Transverse colon (tissue), 4 donors: ENCODE measurements at regions of chr6 and their contacts with region 1.

Region 1: GRCh38 chr6:10883312-10884244 is 1.7 kb upstream of the GCM2 start:
- DNase-seq: no peak
- H3K4me3 ChIP-seq: no peak overlapping the region
- H3K27ac ChIP-seq: no peak overlapping the region
- H3K4me1 ChIP-seq: peaks cover 0 to 16% (median 4%) of the 10 kb centered on the region in 4 donors
- H3K27me3 ChIP-seq: peaks cover 81% of the 10 kb centered on the region
- CTCF ChIP-seq: no peak
- EP300 ChIP-seq: no peak
- POLR2A ChIP-seq: no peak

Region 2: DNA sequence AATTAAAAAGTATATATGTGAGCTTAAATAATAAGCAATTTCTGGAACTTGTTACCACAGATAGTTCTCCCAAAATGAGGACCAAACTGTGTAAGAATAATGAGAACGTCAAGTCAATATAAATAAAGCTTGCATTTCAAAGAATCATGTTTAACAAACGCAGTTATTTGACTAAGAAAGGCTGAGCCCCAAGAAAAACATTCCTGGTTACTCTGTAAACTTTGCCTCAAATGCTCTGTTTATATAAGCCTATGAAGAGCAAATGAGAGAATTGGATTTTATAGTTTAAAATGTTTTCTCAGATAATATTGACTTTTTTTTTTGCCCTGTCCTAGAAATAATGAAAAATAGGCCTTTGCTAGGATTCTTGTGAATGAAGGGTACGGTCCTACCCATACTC is 270.5 kb before region 1 on chr6:
- in situ Hi-C with region 1: no loop called
- intact Hi-C with region 1: no loop called
- DNase-seq: no peak
- H3K4me3 ChIP-seq: no peak overlapping the region
- H3K27ac ChIP-seq: peak overlapping the region; percentile 37 to 60 (median 54)
- H3K4me1 ChIP-seq: peaks cover 0 to 20% (median 7%) of the 10 kb centered on the region in 4 donors
- H3K27me3 ChIP-seq: no peaks in the 10 kb centered on the region
- CTCF ChIP-seq: no peak
- EP300 ChIP-seq: no peak
- POLR2A ChIP-seq: no peak

Region 3: DNA sequence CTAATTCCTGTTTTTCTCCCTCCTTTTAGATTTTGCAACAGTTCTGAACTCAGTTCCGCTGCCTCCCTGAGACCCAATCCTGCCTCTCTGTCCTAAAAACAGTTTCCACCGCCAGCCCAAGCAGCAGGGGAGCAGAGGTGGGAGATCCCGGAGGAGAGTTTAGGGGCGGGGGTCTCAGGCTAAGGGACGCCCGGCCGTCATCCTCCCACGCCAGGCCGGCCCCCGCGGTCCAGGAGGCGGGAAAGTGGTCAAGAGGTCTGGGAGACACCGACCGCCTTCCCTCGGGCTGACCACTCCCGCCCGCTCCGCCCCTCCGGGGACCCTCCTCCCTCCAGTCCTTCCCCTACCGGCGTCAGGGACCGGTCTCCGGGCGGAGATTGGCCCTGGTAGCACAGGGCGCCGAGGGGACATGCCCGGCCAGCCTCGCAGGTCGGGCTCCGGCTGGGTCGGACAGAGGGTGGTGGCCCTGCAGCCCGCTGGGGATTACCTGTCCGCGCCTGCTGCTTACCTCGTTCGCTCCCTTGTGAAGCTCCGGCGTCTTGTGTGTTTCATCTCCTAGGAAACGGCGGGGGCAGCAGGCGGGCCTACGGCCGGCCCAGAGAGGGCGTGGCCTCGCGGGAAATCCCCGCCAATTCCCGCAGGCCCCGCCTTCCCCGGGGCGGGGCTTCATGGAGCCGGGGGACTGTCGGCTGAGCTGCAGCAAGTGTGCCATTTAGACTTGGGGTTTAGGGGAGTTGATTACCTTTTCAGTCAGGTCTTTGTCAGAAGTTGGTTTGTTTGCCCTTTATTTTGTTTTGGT is 45.4 kb before region 1 on chr6 and contains the start of gene MAK:
- in situ Hi-C with region 1: no loop called
- intact Hi-C with region 1: loop called (anchors 2 kb)
- DNase-seq: peak; percentile 88
- H3K4me3 ChIP-seq: peak within 1 kb of the TSS; percentile 37 to 66 (median 54)
- H3K27ac ChIP-seq: peak within 1 kb of the TSS in 2 of 4 donors; percentile 14 to 44
- H3K4me1 ChIP-seq: peaks cover 13 to 22% (median 16%) of the 10 kb centered on the region in 4 donors
- H3K27me3 ChIP-seq: peaks cover 55% of the 10 kb centered on the region
- CTCF ChIP-seq: no peak
- EP300 ChIP-seq: no peak
- POLR2A ChIP-seq: no peak
- total RNA-seq, gene MAK: not detected

Region 4: DNA sequence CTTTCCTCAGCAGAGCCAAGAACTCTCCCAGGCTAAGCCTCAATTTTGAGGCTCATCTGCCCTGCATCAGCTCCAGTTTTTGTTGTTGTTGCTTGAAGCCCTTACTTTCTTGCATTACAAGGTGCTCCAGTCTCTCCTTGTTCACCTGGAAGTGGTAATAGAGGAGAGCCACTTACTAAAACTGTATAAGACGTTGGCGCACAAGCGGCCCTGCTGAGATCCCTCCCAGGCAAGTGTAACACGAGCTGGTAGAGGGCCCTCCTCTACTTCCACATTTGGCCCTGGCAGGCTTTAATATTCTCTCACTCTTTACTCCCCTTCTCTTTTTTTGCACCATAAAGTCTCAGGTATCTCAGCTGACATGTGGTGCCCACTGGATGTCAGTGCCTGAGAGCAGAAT is 21.2 kb before region 1 on chr6:
- in situ Hi-C with region 1: no loop called
- intact Hi-C with region 1: no loop called
- DNase-seq: no peak
- H3K4me3 ChIP-seq: no peak overlapping the region
- H3K27ac ChIP-seq: no peak overlapping the region
- H3K4me1 ChIP-seq: no peaks in the 10 kb centered on the region
- H3K27me3 ChIP-seq: no peaks in the 10 kb centered on the region
- CTCF ChIP-seq: no peak
- EP300 ChIP-seq: no peak
- POLR2A ChIP-seq: no peak

Region 5: DNA sequence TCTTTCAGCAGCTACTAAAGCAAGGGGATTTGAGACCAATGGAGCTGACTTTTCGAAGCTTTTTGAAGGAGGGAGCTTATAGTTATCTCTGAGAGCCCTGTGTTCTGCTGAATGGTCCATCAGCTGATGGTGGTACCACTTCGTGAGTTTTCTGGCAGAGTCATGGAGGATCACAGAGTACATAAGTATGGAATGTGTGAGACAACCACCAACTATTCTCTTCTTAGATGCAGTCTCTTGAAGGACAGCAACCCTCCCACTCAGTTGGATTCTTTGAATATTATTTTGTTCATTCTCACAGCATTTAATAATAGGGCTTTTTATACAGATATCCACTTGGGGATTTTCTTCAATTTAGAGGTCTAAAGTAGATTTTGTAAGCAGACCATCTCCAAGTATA is 85.2 kb after region 1 on chr6:
- in situ Hi-C with region 1: no loop called
- intact Hi-C with region 1: no loop called
- DNase-seq: no peak
- H3K4me3 ChIP-seq: no peak overlapping the region
- H3K27ac ChIP-seq: no peak overlapping the region
- H3K4me1 ChIP-seq: no peaks in the 10 kb centered on the region
- H3K27me3 ChIP-seq: no peaks in the 10 kb centered on the region
- CTCF ChIP-seq: no peak
- EP300 ChIP-seq: no peak
- POLR2A ChIP-seq: no peak

Region 6: DNA sequence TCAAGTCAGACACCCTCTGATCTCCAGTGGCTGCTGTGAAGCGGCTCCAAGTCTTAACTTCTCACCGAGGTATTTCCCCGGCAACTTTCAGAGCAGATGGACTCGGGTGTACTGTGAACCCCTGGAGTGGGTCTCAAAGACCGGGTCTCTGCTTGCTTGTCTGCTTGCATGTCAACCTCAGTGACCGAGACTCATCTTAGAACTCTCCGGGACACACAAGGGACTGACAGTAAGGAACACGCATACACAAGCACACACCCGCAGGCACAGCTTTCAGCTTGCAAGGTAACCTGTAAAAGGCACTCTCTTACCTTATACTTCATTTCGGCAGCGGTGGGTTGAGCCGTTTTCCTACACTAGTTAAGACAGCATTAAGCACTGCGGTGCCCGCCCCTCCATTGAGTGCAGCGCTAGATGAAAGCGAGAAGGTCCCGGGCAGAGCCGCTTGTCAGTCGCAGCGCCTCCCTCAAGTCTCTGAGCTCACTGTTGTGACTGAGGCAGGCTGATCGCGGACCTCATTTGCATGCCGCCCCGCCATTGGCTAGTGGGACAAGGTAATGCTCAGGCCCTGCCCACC is 348.7 kb after region 1 on chr6 and contains the start of gene NEDD9:
- in situ Hi-C with region 1: no loop called
- intact Hi-C with region 1: no loop called
- DNase-seq: peak; percentile 99
- H3K4me3 ChIP-seq: peak within 1 kb of the TSS; percentile 38 to 80 (median 62)
- H3K27ac ChIP-seq: peak within 1 kb of the TSS; percentile 89 to 94 (median 93)
- H3K4me1 ChIP-seq: peaks cover 7 to 32% (median 22%) of the 10 kb centered on the region in 4 donors
- H3K27me3 ChIP-seq: no peaks in the 10 kb centered on the region
- CTCF ChIP-seq: no peak
- EP300 ChIP-seq: no peak
- POLR2A ChIP-seq: peak; percentile 99
- total RNA-seq, gene NEDD9: 34.6 to 82.7 (median 72.3) TPM